Naive thymus-derived CD4-positive, alpha-beta T cell (primary cell): ENCODE measurements at regions of chr5 and their contacts with region 1.

Region 1: DNA sequence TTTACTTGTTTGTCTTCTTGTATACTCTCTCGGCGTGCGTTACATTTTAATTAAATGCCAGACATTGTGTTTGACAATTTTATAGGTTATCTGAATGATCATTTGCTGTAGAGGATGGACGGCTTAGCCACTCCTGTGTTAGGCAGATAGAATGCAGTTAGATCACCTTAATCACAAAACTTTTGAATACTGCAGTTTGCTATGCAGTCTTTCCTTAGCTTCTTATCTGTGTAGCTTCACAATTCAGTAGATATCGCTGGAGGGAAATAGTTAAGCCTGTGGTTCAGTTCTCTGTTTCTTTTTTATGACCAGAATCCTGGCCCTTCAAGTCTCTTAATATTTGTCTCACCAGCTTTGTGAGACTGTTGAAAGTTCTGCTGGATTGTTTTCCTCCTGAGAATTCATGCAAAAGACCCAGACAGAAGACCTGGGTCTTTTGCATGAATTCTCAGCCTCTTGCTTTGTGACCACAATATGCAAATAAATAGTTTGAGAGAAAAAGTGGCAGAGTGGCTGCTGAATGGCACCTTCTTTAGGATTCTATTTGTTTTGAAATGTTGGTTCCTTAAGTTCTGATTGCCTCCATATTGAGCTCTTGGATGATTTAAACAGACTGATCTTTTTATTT is 40.2 kb downstream of the RASA1 start:
- DNase-seq: no peak
- ATAC-seq: no peak
- H3K4me3 ChIP-seq: no peak overlapping the region
- H3K4me3 Mint-ChIP-seq: peak overlapping the region in 2 of 10 donors; percentile 16 to 30
- H3K27ac ChIP-seq: no peak overlapping the region
- H3K27ac Mint-ChIP-seq: peak overlapping the region in 4 of 9 donors; percentile 12 to 69 (median 38)
- H3K4me1 ChIP-seq: peaks cover 0 to 9% of the 10 kb centered on the region in 2 donors
- H3K4me1 Mint-ChIP-seq: peaks cover 15 to 78% (median 56%) of the 10 kb centered on the region in 7 donors
- H3K27me3 ChIP-seq: no peaks in the 10 kb centered on the region
- H3K27me3 Mint-ChIP-seq: no peaks in the 10 kb centered on the region

Region 2: GRCh38 chr5:87322377-87322776 is 14.5 kb after region 1 on chr5:
- CTCF ChIA-PET with region 1: no interaction called
- POLR2A ChIA-PET with region 1: no interaction called
- intact Hi-C with region 1: loop called in 1 of 2 experiments (anchors 2 kb)
- DNase-seq: no peak
- ATAC-seq: no peak
- H3K4me3 ChIP-seq: no peak overlapping the region
- H3K4me3 Mint-ChIP-seq: peak overlapping the region in 3 of 10 donors; percentile 3 to 10 (median 8)
- H3K27ac ChIP-seq: no peak overlapping the region
- H3K27ac Mint-ChIP-seq: peak overlapping the region in 5 of 9 donors; percentile 20 to 54 (median 38)
- H3K4me1 ChIP-seq: peaks cover 4 to 15% of the 10 kb centered on the region in 2 donors
- H3K4me1 Mint-ChIP-seq: peaks cover 24 to 86% (median 61%) of the 10 kb centered on the region in 7 donors
- H3K27me3 ChIP-seq: no peaks in the 10 kb centered on the region
- H3K27me3 Mint-ChIP-seq: no peaks in the 10 kb centered on the region